Activated CD4-positive, alpha-beta T cell treated with anti-CD3 and anti-CD28 coated beads for 36 hours (primary cell): ENCODE measurements at regions of chr5 and their contacts with region 1.

Region 1: GRCh38 chr5:81506900-81507588 is 113.1 kb upstream of the ACOT12 start:
- DNase-seq: peak; percentile 52
- ATAC-seq: peak; percentile 100
- H3K4me3 Mint-ChIP-seq: no peak overlapping the region
- H3K27ac Mint-ChIP-seq: no peak overlapping the region
- H3K4me1 Mint-ChIP-seq: no peaks in the 10 kb centered on the region
- H3K27me3 Mint-ChIP-seq: no peaks in the 10 kb centered on the region

Region 2: GRCh38 chr5:80921026-80921425 is 586.0 kb before region 1 on chr5:
- CTCF ChIA-PET with region 1: no interaction called
- POLR2A ChIA-PET with region 1: no interaction called
- intact Hi-C with region 1: no loop called
- DNase-seq: no peak
- ATAC-seq: no peak
- H3K4me3 Mint-ChIP-seq: no peak overlapping the region
- H3K27ac Mint-ChIP-seq: no peak overlapping the region
- H3K4me1 Mint-ChIP-seq: peaks cover 8% of the 10 kb centered on the region
- H3K27me3 Mint-ChIP-seq: no peaks in the 10 kb centered on the region

Region 3: GRCh38 chr5:81838307-81838906 is 331.4 kb after region 1 on chr5:
- CTCF ChIA-PET with region 1: interaction called, 5 read pairs
- POLR2A ChIA-PET with region 1: no interaction called
- intact Hi-C with region 1: loop called (anchors 1 to 2 kb)
- DNase-seq: peak; percentile 35
- ATAC-seq: peak; percentile 79
- H3K4me3 Mint-ChIP-seq: no peak overlapping the region
- H3K27ac Mint-ChIP-seq: no peak overlapping the region
- H3K4me1 Mint-ChIP-seq: peaks cover 7% of the 10 kb centered on the region
- H3K27me3 Mint-ChIP-seq: no peaks in the 10 kb centered on the region

Region 4: GRCh38 chr5:82165740-82166530 is 658.9 kb after region 1 on chr5:
- CTCF ChIA-PET with region 1: interaction called, 24 read pairs
- POLR2A ChIA-PET with region 1: no interaction called
- intact Hi-C with region 1: loop called (anchors 1 kb)
- DNase-seq: peak; percentile 53
- ATAC-seq: peak; percentile 99
- H3K4me3 Mint-ChIP-seq: no peak overlapping the region
- H3K27ac Mint-ChIP-seq: no peak overlapping the region
- H3K4me1 Mint-ChIP-seq: peaks cover 14% of the 10 kb centered on the region
- H3K27me3 Mint-ChIP-seq: no peaks in the 10 kb centered on the region

Region 5: GRCh38 chr5:82225525-82226172 is 718.6 kb after region 1 on chr5:
- CTCF ChIA-PET with region 1: interaction called, 3 read pairs
- POLR2A ChIA-PET with region 1: no interaction called
- intact Hi-C with region 1: loop called (anchors 1 kb)
- DNase-seq: peak; percentile 75
- ATAC-seq: peak; percentile 93
- H3K4me3 Mint-ChIP-seq: no peak overlapping the region
- H3K27ac Mint-ChIP-seq: no peak overlapping the region
- H3K4me1 Mint-ChIP-seq: no peaks in the 10 kb centered on the region
- H3K27me3 Mint-ChIP-seq: no peaks in the 10 kb centered on the region